PC-3 (cell line): ENCODE measurements at regions of chrX and their contacts with region 1.

Region 1: DNA sequence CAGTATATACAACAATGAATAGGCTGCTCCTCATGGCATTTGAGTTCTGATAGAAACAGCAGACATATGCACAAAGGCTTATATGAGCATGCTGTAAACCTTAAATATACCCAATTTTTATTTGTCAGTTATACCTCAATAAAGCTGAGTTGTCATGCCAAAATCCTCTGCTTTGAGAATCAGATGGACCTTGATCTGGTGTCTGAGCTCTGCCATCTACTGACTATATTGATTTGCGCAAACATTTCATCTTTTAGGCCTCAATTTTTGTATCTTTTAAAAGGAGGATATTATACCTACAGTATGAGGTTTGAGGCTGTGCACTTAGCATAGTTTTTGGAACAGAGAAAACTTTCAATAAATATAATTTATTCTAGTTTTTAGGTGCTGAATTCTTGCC is 85.2 kb downstream of the PRRG1 start:
- DNase-seq: peak; percentile 4
- ATAC-seq: no peak
- H3K4me3 ChIP-seq: no peak overlapping the region
- H3K27ac ChIP-seq: no peak overlapping the region
- H3K4me1 ChIP-seq: no peaks in the 10 kb centered on the region
- H3K27me3 ChIP-seq: no peaks in the 10 kb centered on the region
- CTCF ChIP-seq: no peak; the same call in 1 of the 2 replicates

Region 2: GRCh38 chrX:36869457-36869856 is 564.9 kb before region 1 on chrX:
- CTCF ChIA-PET with region 1: no interaction called
- POLR2A ChIA-PET with region 1: no interaction called
- intact Hi-C with region 1: no loop called
- DNase-seq: no peak
- ATAC-seq: no peak
- H3K4me3 ChIP-seq: no peak overlapping the region
- H3K27ac ChIP-seq: no peak overlapping the region
- H3K4me1 ChIP-seq: no peaks in the 10 kb centered on the region
- H3K27me3 ChIP-seq: no peaks in the 10 kb centered on the region
- CTCF ChIP-seq: no peak

Region 3: DNA sequence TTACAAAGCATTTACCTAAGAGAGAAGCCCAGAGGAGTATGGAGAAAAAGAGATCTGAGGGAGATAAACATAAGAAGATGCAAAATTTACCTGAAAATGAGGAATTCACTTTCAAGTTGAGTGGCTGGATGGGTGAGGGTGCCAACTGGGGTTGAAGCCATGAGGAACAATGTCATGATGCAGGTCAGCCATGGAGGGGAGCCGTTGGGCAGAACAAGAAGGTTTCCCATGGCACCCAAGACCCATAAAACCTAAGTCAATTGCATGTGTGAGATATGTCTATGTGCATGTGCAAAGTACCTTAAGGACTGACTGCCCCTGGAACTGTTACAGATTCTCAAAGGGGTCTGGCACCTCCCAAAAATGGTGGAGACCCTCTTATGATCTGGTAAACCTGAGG is 131.8 kb before region 1 on chrX:
- CTCF ChIA-PET with region 1: no interaction called
- POLR2A ChIA-PET with region 1: no interaction called
- intact Hi-C with region 1: no loop called
- DNase-seq: peak; percentile 52
- ATAC-seq: peak; percentile 33; the same call in 1 of the 2 replicates
- H3K4me3 ChIP-seq: no peak overlapping the region
- H3K27ac ChIP-seq: no peak overlapping the region
- H3K4me1 ChIP-seq: no peaks in the 10 kb centered on the region
- H3K27me3 ChIP-seq: no peaks in the 10 kb centered on the region
- CTCF ChIP-seq: peak; percentile 56

Region 4: GRCh38 chrX:37349221-37350064 is 84.9 kb before region 1 on chrX and contains the start of gene PRRG1:
- CTCF ChIA-PET with region 1: no interaction called
- POLR2A ChIA-PET with region 1: no interaction called
- intact Hi-C with region 1: loop called (anchors 10 kb)
- DNase-seq: peak; percentile 80
- ATAC-seq: peak; percentile 85
- H3K4me3 ChIP-seq: peak within 1 kb of the TSS; percentile 98
- H3K27ac ChIP-seq: peak within 1 kb of the TSS; percentile 41
- H3K4me1 ChIP-seq: peaks cover 9% of the 10 kb centered on the region
- H3K27me3 ChIP-seq: no peaks in the 10 kb centered on the region
- CTCF ChIP-seq: no peak
- total RNA-seq, gene PRRG1: 10.8 and 12.8 TPM in 2 replicates

Region 5: DNA sequence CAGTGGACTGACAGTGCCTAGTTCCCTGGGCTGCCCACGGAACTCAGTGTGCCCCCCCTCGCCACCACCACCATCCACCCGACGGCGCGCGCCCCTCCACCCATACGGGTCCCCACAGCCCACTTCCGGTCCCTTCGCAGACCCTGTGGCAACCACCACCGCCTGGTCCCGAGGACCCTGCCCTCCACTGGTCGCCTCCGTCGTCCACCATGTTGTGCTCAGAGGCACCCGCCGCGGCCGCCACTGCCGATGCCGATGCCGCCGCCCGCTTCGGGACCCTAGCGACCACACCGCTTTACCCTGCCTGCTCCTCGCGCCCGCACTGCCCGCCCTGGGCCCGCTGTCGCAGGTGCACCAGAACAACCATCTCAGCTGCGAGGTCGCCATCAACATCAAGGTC is 70.6 kb after region 1 on chrX:
- CTCF ChIA-PET with region 1: no interaction called
- POLR2A ChIA-PET with region 1: no interaction called
- intact Hi-C with region 1: no loop called
- DNase-seq: no peak
- ATAC-seq: no peak
- H3K4me3 ChIP-seq: no peak overlapping the region
- H3K27ac ChIP-seq: no peak overlapping the region
- H3K4me1 ChIP-seq: no peaks in the 10 kb centered on the region
- H3K27me3 ChIP-seq: no peaks in the 10 kb centered on the region
- CTCF ChIP-seq: no peak

Region 6: GRCh38 chrX:38103857-38104812 is 669.8 kb after region 1 on chrX:
- CTCF ChIA-PET with region 1: no interaction called
- POLR2A ChIA-PET with region 1: no interaction called
- intact Hi-C with region 1: no loop called
- DNase-seq: no peak
- ATAC-seq: no peak
- H3K4me3 ChIP-seq: no peak overlapping the region
- H3K27ac ChIP-seq: no peak overlapping the region
- H3K4me1 ChIP-seq: no peaks in the 10 kb centered on the region
- H3K27me3 ChIP-seq: no peaks in the 10 kb centered on the region
- CTCF ChIP-seq: no peak